K562 (cell line): ENCODE measurements at regions of chr7 and their contacts with region 1.

Region 1: GRCh38 chr7:123580406-123581161 is 21.0 kb upstream of the ASB15 start:
- DNase-seq: peak in 2 of 4 experiments; percentile 43 to 78
- ATAC-seq: peak; percentile 96
- H3K4me3 ChIP-seq: no peak overlapping the region
- H3K27ac ChIP-seq: no peak overlapping the region
- H3K4me1 ChIP-seq: 0 out of 5 replicates have a peak, but pooled peaks cover 0 to 2% of the 10 kb centered on the region in 2 experiments
- H3K27me3 ChIP-seq: no peaks in the 10 kb centered on the region
- CTCF ChIP-seq: peak; percentile 81 to 95 (median 83)
- EP300 ChIP-seq: no peak
- POLR2A ChIP-seq: no peak
- RAD21 ChIP-seq: peak; percentile 97 to 98

Region 2: DNA sequence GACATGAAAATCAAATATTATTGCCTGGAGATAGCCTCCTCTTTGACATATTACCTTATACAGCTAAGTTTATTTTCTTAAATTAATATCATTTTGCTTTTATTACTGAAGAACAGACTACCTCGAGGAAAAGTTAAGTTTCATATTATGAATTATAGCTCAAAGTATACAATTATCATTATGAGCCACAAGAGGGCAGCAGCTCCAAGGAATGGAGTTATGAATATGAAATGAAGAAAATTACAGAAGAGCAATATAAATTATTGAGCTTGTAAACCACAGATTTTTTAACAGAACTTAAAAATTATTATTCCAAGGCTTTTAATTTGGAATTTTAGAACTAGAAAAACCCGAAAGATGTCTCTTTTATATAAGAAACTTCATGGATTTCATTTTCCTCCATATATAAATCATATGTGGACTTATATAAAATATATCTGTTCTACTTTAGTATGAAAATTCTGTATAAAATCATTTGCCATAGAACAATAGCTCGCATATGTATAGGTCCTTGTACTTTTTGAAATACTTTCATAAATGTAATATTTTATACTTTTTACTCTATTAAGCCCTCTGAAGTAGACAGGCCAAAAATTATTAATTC is 86.3 kb before region 1 on chr7:
- CTCF ChIA-PET with region 1: no interaction called
- POLR2A ChIA-PET with region 1: no interaction called
- in situ Hi-C with region 1: no loop called
- intact Hi-C with region 1: loop called (anchors 1 kb)
- DNase-seq: peak; percentile 52 to 81 (median 54)
- ATAC-seq: peak; percentile 58
- H3K4me3 ChIP-seq: no peak overlapping the region
- H3K27ac ChIP-seq: no peak overlapping the region
- H3K4me1 ChIP-seq: peaks cover 0 to 17% of the 10 kb centered on the region in 2 experiments; a peak in 4 of 5 replicates
- H3K27me3 ChIP-seq: no peaks in the 10 kb centered on the region
- CTCF ChIP-seq: peak in 2 of 3 experiments; percentile 81 to 95; a peak in 5 of 6 replicates
- EP300 ChIP-seq: 0 out of 2 replicates have a peak, but pooled peaks have one; percentile 3
- POLR2A ChIP-seq: no peak
- RAD21 ChIP-seq: peak; percentile 95 to 96

Region 3: GRCh38 chr7:123594813-123595241 is 14.2 kb after region 1 on chr7:
- CTCF ChIA-PET with region 1: no interaction called
- POLR2A ChIA-PET with region 1: no interaction called
- in situ Hi-C with region 1: no loop called
- intact Hi-C with region 1: no loop called
- DNase-seq: peak in 1 of 4 experiments; percentile 84
- ATAC-seq: peak; percentile 89
- H3K4me3 ChIP-seq: no peak overlapping the region
- H3K27ac ChIP-seq: no peak overlapping the region
- H3K4me1 ChIP-seq: peaks cover 4% of the 10 kb centered on the region in 2 experiments; a peak in 4 of 5 replicates
- H3K27me3 ChIP-seq: no peaks in the 10 kb centered on the region
- CTCF ChIP-seq: peak in 1 of 3 experiments; percentile 32; a peak in 2 of 6 replicates
- EP300 ChIP-seq: no peak; the same call in 1 of the 2 replicates
- POLR2A ChIP-seq: no peak
- RAD21 ChIP-seq: peak in 1 of 2 experiments; percentile 11; a peak in 2 of 4 replicates

Region 4: GRCh38 chr7:123669485-123669884 is 88.9 kb after region 1 on chr7:
- CTCF ChIA-PET with region 1: no interaction called
- POLR2A ChIA-PET with region 1: no interaction called
- in situ Hi-C with region 1: no loop called
- intact Hi-C with region 1: no loop called
- DNase-seq: no peak
- ATAC-seq: no peak
- H3K4me3 ChIP-seq: no peak overlapping the region
- H3K27ac ChIP-seq: no peak overlapping the region
- H3K4me1 ChIP-seq: no peaks in the 10 kb centered on the region
- H3K27me3 ChIP-seq: peaks cover 2 to 4% of the 10 kb centered on the region in 2 experiments; a peak in 1 of 5 replicates
- CTCF ChIP-seq: no peak
- EP300 ChIP-seq: no peak
- POLR2A ChIP-seq: no peak
- RAD21 ChIP-seq: no peak

Region 5: GRCh38 chr7:123682690-123683089 is 102.1 kb after region 1 on chr7:
- CTCF ChIA-PET with region 1: interaction called, 4 read pairs
- POLR2A ChIA-PET with region 1: no interaction called
- in situ Hi-C with region 1: no loop called
- intact Hi-C with region 1: loop called (anchors 2 kb)
- DNase-seq: peak; percentile 32 to 70 (median 41)
- ATAC-seq: peak; percentile 79
- H3K4me3 ChIP-seq: no peak overlapping the region
- H3K27ac ChIP-seq: no peak overlapping the region
- H3K4me1 ChIP-seq: no peaks in the 10 kb centered on the region
- H3K27me3 ChIP-seq: no peaks in the 10 kb centered on the region
- CTCF ChIP-seq: peak; percentile 54 to 82 (median 59); a peak in 5 of 6 replicates
- EP300 ChIP-seq: no peak
- POLR2A ChIP-seq: no peak
- RAD21 ChIP-seq: peak; percentile 87 to 92

Region 6: GRCh38 chr7:123865517-123866117 is 285.0 kb after region 1 on chr7:
- CTCF ChIA-PET with region 1: interaction called, 3 read pairs
- POLR2A ChIA-PET with region 1: no interaction called
- in situ Hi-C with region 1: no loop called
- intact Hi-C with region 1: loop called (anchors 2 kb)
- DNase-seq: peak; percentile 42 to 80 (median 68)
- ATAC-seq: peak; percentile 96
- H3K4me3 ChIP-seq: no peak overlapping the region
- H3K27ac ChIP-seq: no peak overlapping the region
- H3K4me1 ChIP-seq: no peaks in the 10 kb centered on the region
- H3K27me3 ChIP-seq: 0 out of 5 replicates have a peak, but pooled peaks cover 0 to 5% of the 10 kb centered on the region in 2 experiments
- CTCF ChIP-seq: peak; percentile 65 to 84 (median 72)
- EP300 ChIP-seq: no peak
- POLR2A ChIP-seq: no peak
- RAD21 ChIP-seq: peak; percentile 92 to 93

Region 7: DNA sequence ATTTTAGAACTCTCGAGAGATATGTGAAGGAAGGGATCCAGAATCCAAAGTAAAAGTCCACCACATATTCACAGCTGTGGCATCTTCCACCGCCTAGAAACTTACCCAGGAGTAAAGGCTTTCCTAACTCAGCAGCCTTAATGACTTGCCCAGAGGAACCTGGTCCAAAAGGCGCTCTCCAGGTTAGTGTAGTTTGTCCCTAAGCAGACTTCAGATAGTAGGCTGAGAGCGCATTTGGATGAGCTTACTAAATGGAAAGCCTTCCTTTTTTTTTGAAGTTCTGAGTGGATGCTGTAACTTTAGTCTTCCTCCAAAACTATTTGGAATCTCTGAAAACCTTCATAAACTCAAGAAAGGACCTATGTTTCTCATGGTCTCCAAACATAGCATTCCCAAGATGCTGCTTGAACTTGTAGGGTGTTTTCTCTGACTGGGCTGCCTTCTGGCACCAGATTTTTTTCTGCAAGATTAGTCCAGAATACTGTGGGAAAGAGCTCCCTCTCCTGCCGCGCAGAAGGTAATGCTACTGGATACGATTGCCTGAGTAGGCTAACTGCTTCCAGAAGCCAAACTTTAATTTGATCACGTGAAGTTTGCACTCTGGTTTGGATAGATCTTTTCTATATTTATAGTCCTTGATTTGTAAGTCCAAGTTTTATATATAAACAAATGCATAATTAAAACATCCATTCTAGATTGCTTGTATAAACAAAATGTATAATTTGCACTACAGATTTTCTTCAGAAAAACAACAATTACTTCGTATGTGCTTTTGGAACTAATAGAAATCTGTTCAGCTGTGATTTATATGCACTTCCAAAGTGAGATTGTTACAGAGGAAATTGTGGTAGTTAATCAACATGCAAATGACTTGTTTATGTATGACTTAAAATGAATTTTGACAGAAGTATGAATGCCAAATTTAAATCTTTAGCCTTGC is 1204.6 kb after region 1 on chr7:
- CTCF ChIA-PET with region 1: no interaction called
- POLR2A ChIA-PET with region 1: no interaction called
- in situ Hi-C with region 1: no loop called
- intact Hi-C with region 1: loop called (anchors 2 kb)
- DNase-seq: peak; percentile 57 to 70 (median 60)
- ATAC-seq: peak; percentile 90
- H3K4me3 ChIP-seq: no peak overlapping the region
- H3K27ac ChIP-seq: no peak overlapping the region
- H3K4me1 ChIP-seq: no peaks in the 10 kb centered on the region; a peak in 1 of 5 replicates
- H3K27me3 ChIP-seq: no peaks in the 10 kb centered on the region; a peak in 1 of 5 replicates
- CTCF ChIP-seq: peak; percentile 75 to 87 (median 85)
- EP300 ChIP-seq: no peak
- POLR2A ChIP-seq: no peak
- RAD21 ChIP-seq: peak; percentile 94 to 95